Activated naive CD4-positive, alpha-beta T cell treated with anti-CD3 and anti-CD28 coated beads for 36 hours (primary cell): ENCODE measurements at regions of chr12 and their contacts with region 1.

Region 1: GRCh38 chr12:110742718-110743570 is at the start of gene PPP1CC:
- DNase-seq: peak; percentile 93
- H3K4me3 Mint-ChIP-seq: peak within 1 kb of the TSS; percentile 99
- H3K27ac Mint-ChIP-seq: peak within 1 kb of the TSS; percentile 98
- H3K4me1 Mint-ChIP-seq: peaks cover 37% of the 10 kb centered on the region
- H3K27me3 Mint-ChIP-seq: no peaks in the 10 kb centered on the region
- total RNA-seq, gene PPP1CC: 280 to 285 TPM

Region 2: GRCh38 chr12:109995686-109996482 is 747.1 kb before region 1 on chr12 and contains the start of gene GIT2:
- CTCF ChIA-PET with region 1: no interaction called
- intact Hi-C with region 1: loop called (anchors 10 kb)
- DNase-seq: peak; percentile 96
- H3K4me3 Mint-ChIP-seq: peak within 1 kb of the TSS; percentile 94
- H3K27ac Mint-ChIP-seq: peak within 1 kb of the TSS; percentile 93
- H3K4me1 Mint-ChIP-seq: peaks cover 54% of the 10 kb centered on the region
- H3K27me3 Mint-ChIP-seq: no peaks in the 10 kb centered on the region
- total RNA-seq, gene GIT2: 40.2 to 41.6 TPM

Region 3: DNA sequence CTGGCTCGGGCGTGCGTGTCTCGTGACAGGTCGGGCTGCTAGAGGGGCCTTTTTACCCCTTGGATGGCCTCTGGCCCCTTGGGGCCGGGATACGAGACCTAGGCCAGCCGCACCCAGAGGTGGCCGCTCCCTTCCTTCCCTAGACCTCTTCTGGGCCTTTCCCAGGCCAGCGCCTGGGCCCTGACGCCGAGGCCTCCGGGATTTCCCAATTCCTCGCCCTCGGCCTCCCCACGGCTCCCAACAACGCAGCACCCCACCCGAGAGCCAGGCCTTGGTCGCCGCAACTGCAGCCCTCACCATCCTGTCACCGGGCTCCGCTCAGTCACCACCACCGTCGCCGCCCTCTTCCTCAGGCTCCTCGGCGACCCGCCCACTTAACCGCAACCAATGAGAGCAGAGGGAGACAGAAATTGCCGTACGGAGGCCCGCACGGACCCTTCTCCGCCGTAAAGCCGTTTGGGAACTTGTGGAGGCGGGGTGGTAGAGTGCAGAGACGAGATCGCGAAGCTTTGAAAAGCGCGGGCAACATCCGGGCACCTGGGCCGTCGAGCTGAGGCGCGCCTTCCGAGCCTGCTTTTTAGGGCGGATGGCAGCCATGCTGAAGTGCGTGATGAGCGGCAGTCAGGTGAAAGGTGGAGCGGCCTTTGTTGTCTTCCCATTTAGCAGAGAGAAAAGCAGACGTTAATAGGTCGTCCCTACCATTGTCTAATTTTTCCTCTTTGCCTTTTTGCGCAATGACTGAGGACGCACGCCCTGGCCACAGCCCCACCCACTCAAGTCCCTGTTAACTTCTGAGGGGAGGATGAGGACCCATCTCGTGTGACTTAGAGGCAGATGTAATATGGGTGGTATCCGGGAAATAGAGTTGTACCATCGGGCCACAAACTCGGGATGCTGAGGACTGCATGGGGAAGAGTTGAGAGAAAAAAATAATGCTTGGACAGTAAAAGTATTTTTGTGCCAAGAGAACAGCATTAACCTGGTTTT is 240.9 kb before region 1 on chr12 and contains the starts of genes RAD9B and VPS29:
- CTCF ChIA-PET with region 1: no interaction called
- intact Hi-C with region 1: loop called (anchors 2 kb)
- DNase-seq: peak; percentile 100
- H3K4me3 Mint-ChIP-seq: peak within 1 kb of the TSS; percentile 94
- H3K27ac Mint-ChIP-seq: peak within 1 kb of the TSS; percentile 96
- H3K4me1 Mint-ChIP-seq: peaks cover 32% of the 10 kb centered on the region
- H3K27me3 Mint-ChIP-seq: no peaks in the 10 kb centered on the region
- total RNA-seq, gene RAD9B: 1.1 to 1.5 TPM
- total RNA-seq, gene VPS29: 76.6 to 81.8 TPM

Region 4: DNA sequence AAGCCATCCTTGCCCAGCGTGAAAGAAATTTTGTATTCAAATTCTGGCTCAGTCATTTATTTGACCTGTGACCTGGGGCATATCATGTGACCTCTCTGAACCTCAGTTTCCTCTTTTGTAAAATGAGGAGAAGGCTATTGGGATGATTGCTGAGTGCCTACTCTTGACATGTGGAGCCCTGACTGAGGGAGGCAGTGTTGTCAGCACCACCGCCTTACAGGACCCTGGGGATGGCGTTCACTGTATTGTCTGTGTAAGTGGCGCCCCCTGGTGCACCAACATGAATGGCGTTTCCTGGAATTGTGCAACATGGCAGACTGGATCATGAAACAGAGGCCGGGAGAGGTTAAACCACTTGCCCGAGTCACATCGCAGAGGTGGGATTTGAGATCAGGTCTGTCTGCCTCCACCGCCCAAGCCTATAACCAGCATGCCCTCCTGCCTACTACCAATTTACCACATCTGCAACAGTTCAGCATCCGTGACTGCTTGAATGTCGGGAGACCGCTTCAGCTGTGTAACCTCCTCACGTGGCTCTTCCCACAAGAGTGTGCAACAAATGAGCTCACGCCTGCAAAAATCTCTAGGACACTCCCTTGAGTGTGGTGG is 83.8 kb after region 1 on chr12:
- CTCF ChIA-PET with region 1: interaction called, 6 read pairs
- intact Hi-C with region 1: loop called (anchors 1 kb)
- DNase-seq: peak; percentile 97
- H3K4me3 Mint-ChIP-seq: peak overlapping the region; percentile 7
- H3K27ac Mint-ChIP-seq: peak overlapping the region; percentile 50
- H3K4me1 Mint-ChIP-seq: peaks cover 15% of the 10 kb centered on the region
- H3K27me3 Mint-ChIP-seq: no peaks in the 10 kb centered on the region